Gastrocnemius medialis (tissue), 4 donors: ENCODE measurements at regions of chr2 and their contacts with region 1.

Region 1: DNA sequence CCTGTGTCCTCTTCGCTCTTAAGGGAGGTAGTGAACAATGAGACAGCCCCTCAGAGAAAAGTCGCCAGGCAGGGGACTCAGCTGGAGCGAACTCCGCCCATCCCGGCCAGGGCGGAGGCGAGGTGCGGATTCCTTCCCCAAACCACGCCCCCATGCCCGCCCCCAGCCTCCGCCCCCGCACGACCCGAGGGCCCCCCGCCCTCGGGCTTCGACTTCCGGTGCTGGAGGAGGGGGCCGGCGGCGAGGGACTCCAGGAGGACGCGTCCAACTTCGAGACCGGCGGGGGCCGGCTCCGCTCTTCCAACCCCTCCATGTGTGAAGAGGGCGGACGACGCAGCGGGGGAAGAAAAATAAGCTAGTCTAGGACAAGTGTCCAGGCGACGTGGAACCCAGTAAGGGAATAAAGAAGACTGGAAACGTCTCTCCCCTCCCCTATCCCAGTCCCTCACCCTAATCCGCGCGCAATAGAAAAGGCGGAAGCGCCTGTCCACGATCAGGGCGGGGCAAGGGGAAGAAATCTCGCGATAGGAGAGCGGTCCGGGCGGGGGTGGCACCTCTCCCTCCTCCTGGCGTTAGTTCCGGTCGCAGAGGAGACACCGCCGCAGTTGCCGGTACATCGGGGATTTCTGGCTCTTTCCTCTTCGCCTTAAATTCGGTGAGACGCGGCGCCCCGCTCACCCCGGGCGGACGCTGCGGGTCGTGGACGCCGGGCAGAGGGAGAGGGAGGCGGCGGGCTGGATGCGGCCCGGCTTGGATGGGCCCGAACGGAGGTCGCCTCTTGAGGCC is at the start of gene BZW1:
- DNase-seq: peak; percentile 95
- ATAC-seq: peak; percentile 86 to 88
- H3K4me3 ChIP-seq: peak within 1 kb of the TSS; percentile 77 to 98 (median 92)
- H3K27ac ChIP-seq: peak within 1 kb of the TSS; percentile 95 to 99 (median 98)
- H3K4me1 ChIP-seq: peaks cover 31 to 34% of the 10 kb centered on the region in 2 donors
- H3K27me3 ChIP-seq: no peaks in the 10 kb centered on the region
- CTCF ChIP-seq: no peak
- POLR2A ChIP-seq: peak; percentile 95 to 96
- total RNA-seq, gene BZW1: 204 to 317 (median 240) TPM

Region 2: GRCh38 chr2:199955339-199956261 is 855.9 kb before region 1 on chr2 and contains the starts of genes MAIP1 and TYW5:
- in situ Hi-C with region 1: no loop called
- intact Hi-C with region 1: loop called (anchors 1 kb)
- DNase-seq: peak; percentile 68 to 72
- ATAC-seq: peak; percentile 98
- H3K4me3 ChIP-seq: peak within 1 kb of the TSS; percentile 83 to 94 (median 90)
- H3K27ac ChIP-seq: peak within 1 kb of the TSS; percentile 86 to 94 (median 90)
- H3K4me1 ChIP-seq: peaks cover 33% of the 10 kb centered on the region in 2 donors
- H3K27me3 ChIP-seq: no peaks in the 10 kb centered on the region
- CTCF ChIP-seq: peak in 3 of 5 experiments; percentile 34 to 43 (median 34)
- POLR2A ChIP-seq: peak; percentile 24 to 56
- total RNA-seq, gene MAIP1: 21.9 to 40.2 (median 26.6) TPM
- total RNA-seq, gene TYW5: 1.7 to 4.5 (median 3.8) TPM

Region 3: DNA sequence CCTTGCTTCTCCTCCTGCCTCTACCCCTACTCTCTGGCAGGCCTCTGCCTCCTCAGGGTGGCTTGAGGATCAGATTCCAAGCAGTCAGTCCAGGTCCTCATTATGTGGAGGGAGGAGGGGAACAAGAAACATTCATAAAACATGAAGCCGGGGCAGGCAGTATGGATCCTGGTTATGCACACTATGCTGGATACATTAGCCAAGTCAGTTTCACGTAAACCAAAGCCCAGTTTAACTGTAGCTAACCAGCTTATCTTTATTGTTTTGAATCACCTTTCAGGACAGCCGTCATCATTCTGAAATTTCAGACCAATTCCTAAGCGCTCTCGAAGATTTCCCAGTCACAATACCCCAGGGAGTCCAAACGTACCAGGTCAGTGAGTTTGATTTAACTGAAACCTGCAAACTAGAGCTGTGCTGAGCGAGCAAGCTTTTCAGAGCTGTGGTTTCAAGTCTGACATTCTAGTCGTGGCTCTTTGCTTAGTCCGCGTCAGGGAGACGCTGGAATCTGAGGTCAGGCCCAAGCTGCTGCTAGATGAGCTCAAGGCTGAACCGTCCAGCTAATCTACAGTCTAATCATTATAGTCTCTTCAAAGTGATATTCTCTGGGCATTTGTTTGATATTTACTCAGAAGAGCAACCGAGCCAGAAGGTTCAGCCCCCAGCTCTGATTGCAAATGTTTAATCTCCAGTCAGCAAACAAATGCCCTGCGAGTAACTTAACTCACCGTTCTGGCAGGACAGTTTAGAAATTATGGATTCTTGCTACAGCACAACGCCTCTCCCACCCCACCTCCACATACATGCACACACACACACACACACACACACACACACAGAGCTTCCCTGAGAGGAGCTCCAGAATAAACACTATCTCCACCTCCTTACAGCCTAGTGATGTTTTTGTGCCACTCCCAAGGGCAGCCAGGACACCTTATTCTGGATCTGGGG is 63.6 kb before region 1 on chr2:
- in situ Hi-C with region 1: no loop called
- intact Hi-C with region 1: loop called (anchors 5 kb)
- DNase-seq: no peak
- ATAC-seq: peak; percentile 30 to 42
- H3K4me3 ChIP-seq: no peak overlapping the region
- H3K27ac ChIP-seq: peak overlapping the region; percentile 7 to 59 (median 51)
- H3K4me1 ChIP-seq: peaks cover 5 to 6% of the 10 kb centered on the region in 2 donors
- H3K27me3 ChIP-seq: no peaks in the 10 kb centered on the region
- CTCF ChIP-seq: no peak
- POLR2A ChIP-seq: no peak

Region 4: DNA sequence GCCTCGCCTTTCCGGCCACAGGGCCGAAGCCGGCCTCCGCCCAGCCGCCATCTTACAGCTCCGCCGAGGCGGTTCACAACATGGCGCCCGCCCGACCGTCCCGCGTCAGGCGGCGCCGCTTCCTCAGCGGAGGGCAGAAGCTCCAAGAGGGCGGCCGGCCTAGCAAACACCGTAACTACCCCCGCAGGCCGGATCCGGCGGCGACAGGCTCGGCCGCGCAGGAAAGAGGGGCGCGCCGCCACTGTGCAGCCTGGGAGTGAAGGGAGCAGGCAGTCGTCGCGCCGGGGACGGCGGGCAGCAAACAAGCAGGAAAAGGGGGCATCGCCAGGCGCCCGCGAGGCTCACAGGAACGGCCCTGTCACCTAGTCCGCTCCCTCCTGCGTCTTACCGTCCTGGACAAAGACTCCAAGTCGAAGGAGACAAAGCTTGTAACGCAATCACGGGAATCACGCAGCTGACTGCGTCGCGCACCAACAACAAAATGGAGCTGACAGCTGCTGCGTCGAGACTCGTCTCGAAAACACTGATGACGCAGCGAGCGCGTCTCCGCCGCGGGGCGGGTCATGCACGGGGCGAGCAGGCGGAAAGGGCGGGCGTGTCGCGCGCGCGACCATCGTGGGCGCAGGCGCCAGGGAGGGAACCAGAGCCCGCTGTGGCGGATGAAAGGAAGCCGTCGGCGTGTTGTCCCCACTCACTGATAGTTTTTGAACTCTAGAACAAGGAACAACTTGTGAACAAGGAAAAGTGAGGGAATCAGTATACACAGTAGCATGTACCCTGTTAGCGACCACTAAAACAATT is 52.8 kb after region 1 on chr2 and contains the start of gene CLK1:
- in situ Hi-C with region 1: loop called in 2 of 4 experiments (anchors 5 to 10 kb)
- intact Hi-C with region 1: loop called (anchors 1 kb)
- DNase-seq: peak; percentile 94 to 96
- ATAC-seq: peak; percentile 81 to 83
- H3K4me3 ChIP-seq: peak within 1 kb of the TSS; percentile 97 to 99 (median 98)
- H3K27ac ChIP-seq: peak within 1 kb of the TSS; percentile 100
- H3K4me1 ChIP-seq: peaks cover 28 to 34% of the 10 kb centered on the region in 2 donors
- H3K27me3 ChIP-seq: no peaks in the 10 kb centered on the region
- CTCF ChIP-seq: peak in 1 of 5 experiments; percentile 18
- POLR2A ChIP-seq: peak; percentile 99
- total RNA-seq, gene CLK1: 61.6 to 104 (median 85.3) TPM

Region 5: DNA sequence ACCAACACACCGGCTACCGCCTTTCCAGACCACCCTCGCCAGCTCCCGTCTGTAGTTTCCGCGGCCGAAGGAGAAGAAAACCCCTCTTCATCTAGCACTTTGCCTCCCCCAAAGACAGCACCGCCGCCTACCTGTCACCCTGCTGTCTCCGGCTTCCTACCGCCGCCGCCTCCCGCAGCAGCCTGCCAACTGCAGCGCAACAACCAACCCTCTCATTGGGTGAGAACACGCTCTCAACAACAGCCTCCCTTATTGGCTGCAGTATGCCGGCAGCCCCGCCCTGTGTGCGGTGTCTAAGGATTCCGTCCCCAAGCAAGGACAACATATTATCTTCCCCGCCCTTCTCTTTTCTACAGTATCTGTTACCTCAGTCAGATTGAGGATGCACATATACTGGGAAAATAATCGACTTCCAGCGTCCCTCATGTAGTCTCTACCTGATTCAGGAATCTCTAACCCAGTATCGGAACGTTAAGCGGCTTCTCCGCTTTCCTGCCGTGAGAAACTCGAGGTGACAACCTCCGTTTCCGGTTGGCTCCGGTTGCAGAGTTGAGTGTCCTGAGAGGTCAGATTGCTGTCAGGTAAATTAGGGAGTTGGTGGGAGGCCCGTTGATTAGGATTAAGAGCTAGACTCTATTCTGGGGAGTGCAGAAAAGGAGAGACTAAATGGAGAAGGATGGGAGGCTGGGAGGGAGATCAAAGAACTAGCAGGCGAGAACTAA is 260.1 kb after region 1 on chr2 and contains the starts of genes HYCC2 and NDUFB3:
- in situ Hi-C with region 1: no loop called
- intact Hi-C with region 1: loop called (anchors 2 kb)
- DNase-seq: peak; percentile 89 to 94
- ATAC-seq: peak; percentile 97 to 99
- H3K4me3 ChIP-seq: peak within 1 kb of the TSS; percentile 66 to 97 (median 88)
- H3K27ac ChIP-seq: peak within 1 kb of the TSS; percentile 83 to 96 (median 88)
- H3K4me1 ChIP-seq: peaks cover 49 to 57% of the 10 kb centered on the region in 2 donors
- H3K27me3 ChIP-seq: no peaks in the 10 kb centered on the region
- CTCF ChIP-seq: peak; percentile 10 to 61 (median 30)
- POLR2A ChIP-seq: peak; percentile 61 to 69
- total RNA-seq, gene HYCC2: 2.3 to 12.5 (median 3.5) TPM
- total RNA-seq, gene NDUFB3: 107 to 146 (median 135) TPM